ENCODE measurements at regions of chr2 and their contacts with region 1.

Region 1: GRCh38 chr2:151638191-151638933 is 95.9 kb downstream of the NEB start:
- DNase-seq: peak; percentile 62
- ATAC-seq: peak; percentile 15
- H3K4me3 ChIP-seq: no peak overlapping the region
- H3K4me3 Mint-ChIP-seq: peak overlapping the region; percentile 77
- H3K27ac ChIP-seq: peak overlapping the region; percentile 78 to 89
- H3K27ac Mint-ChIP-seq: peak overlapping the region; percentile 93
- H3K4me1 ChIP-seq: peaks cover 22 to 26% of the 10 kb centered on the region in 2 donors
- H3K4me1 Mint-ChIP-seq: peaks cover 28% of the 10 kb centered on the region
- H3K27me3 ChIP-seq: no peaks in the 10 kb centered on the region
- H3K27me3 Mint-ChIP-seq: no peaks in the 10 kb centered on the region
- CTCF ChIP-seq: no peak

Region 2: DNA sequence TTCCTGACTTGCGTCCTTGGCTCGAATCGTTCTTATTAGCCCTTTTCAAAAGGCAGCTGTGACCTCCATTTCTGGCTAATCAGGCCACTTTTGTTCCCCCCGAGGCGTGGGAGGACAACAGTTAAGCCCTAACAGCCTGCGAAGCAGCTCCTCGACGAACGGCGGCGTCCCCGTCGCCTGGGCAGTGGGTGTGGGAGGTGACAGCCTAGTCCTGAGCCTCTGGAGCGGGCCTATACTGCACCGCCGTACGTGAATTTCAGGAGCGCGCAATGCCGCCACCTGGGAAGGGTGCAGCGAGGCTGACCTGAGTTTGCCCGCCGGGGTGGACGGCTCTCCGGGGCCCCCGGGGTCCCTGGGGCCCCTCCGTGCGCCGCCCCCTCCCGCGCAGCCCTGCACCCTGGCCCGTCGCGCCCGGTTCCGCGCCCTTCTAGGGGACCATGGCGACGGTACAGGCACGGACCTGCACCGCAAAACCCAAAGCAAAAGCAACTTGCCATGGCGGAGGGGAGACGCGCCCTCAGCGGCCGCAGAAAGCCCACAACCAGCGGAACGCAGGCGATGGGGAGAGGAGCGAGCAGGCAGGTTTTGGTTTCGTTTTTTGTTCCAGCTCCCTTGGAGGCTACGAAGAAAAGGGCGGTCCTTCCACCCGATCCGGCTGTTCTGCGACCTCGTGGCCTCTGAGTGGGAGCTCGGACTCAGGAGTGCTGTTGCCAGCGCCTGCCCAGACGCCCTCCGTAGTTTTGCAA is 377.0 kb before region 1 on chr2 and contains the start of gene RBM43:
- CTCF ChIA-PET with region 1: no interaction called
- POLR2A ChIA-PET with region 1: no interaction called
- intact Hi-C with region 1: loop called (anchors 10 kb)
- DNase-seq: peak; percentile 86
- ATAC-seq: peak; percentile 84
- H3K4me3 ChIP-seq: peak within 1 kb of the TSS; percentile 78 to 96 (median 85)
- H3K4me3 Mint-ChIP-seq: peak within 1 kb of the TSS; percentile 94
- H3K27ac ChIP-seq: peak within 1 kb of the TSS; percentile 88 to 91
- H3K27ac Mint-ChIP-seq: peak within 1 kb of the TSS; percentile 87
- H3K4me1 ChIP-seq: peaks cover 11 to 12% of the 10 kb centered on the region in 2 donors
- H3K4me1 Mint-ChIP-seq: peaks cover 23% of the 10 kb centered on the region
- H3K27me3 ChIP-seq: no peaks in the 10 kb centered on the region
- H3K27me3 Mint-ChIP-seq: no peaks in the 10 kb centered on the region
- CTCF ChIP-seq: no peak
- total RNA-seq, gene RBM43: 8.4 and 9.0 TPM in 2 replicates

Region 3: DNA sequence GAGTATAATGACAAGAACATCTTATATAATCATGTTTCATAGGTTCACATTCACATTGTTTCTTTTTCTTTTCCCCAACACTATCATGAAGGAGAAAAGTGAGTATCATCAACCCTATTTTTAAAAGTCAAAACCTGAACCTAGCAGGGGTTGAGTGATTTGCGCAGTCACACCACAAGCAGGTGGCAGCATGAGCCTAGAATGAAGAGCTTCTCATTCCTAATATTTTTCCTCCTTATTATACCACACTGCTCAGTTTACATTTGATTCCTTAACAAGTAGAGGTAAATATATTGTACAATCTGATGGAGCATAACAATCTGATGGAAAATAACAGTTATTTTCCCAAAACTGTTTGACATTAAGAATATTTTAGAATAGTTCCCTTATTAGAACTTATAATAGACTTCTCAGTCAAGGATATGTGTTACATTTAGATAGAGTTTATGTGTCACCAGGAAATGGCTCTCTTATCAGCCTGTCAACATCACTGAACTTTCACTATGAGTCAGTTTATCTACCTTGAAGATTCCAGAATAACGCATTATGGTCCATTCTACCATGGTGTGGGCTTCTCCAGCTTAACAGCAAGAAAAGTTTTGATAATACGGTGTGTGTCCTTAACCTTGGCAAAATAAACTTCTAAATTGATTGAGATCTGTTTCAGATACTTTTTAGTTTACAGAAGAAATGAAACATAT is 23.6 kb before region 1 on chr2:
- CTCF ChIA-PET with region 1: interaction called, 10 read pairs
- POLR2A ChIA-PET with region 1: no interaction called
- intact Hi-C with region 1: no loop called
- DNase-seq: no peak
- ATAC-seq: no peak
- H3K4me3 ChIP-seq: no peak overlapping the region
- H3K4me3 Mint-ChIP-seq: no peak overlapping the region
- H3K27ac ChIP-seq: no peak overlapping the region
- H3K27ac Mint-ChIP-seq: no peak overlapping the region
- H3K4me1 ChIP-seq: no peaks in the 10 kb centered on the region
- H3K4me1 Mint-ChIP-seq: peaks cover 2% of the 10 kb centered on the region
- H3K27me3 ChIP-seq: no peaks in the 10 kb centered on the region
- H3K27me3 Mint-ChIP-seq: no peaks in the 10 kb centered on the region
- CTCF ChIP-seq: no peak

Region 4: GRCh38 chr2:151766437-151767153 is 128.2 kb after region 1 on chr2:
- CTCF ChIA-PET with region 1: interaction called, 17 read pairs
- POLR2A ChIA-PET with region 1: interaction called, 5 read pairs
- intact Hi-C with region 1: loop called (anchors 1 kb)
- DNase-seq: peak; percentile 66
- ATAC-seq: peak; percentile 62
- H3K4me3 ChIP-seq: peak overlapping the region in 2 of 5 experiments; percentile 8 to 40
- H3K4me3 Mint-ChIP-seq: peak overlapping the region; percentile 69
- H3K27ac ChIP-seq: peak overlapping the region; percentile 79 to 89
- H3K27ac Mint-ChIP-seq: peak overlapping the region; percentile 93
- H3K4me1 ChIP-seq: peaks cover 85 to 90% of the 10 kb centered on the region in 2 donors
- H3K4me1 Mint-ChIP-seq: peaks cover 87% of the 10 kb centered on the region
- H3K27me3 ChIP-seq: no peaks in the 10 kb centered on the region
- H3K27me3 Mint-ChIP-seq: no peaks in the 10 kb centered on the region
- CTCF ChIP-seq: no peak

Region 5: GRCh38 chr2:151771599-151772358 is 133.4 kb after region 1 on chr2:
- CTCF ChIA-PET with region 1: interaction called, 17 read pairs
- POLR2A ChIA-PET with region 1: interaction called, 5 read pairs
- intact Hi-C with region 1: loop called (anchors 1 kb)
- DNase-seq: peak; percentile 93
- ATAC-seq: peak; percentile 90
- H3K4me3 ChIP-seq: peak overlapping the region in 1 of 5 experiments; percentile 38
- H3K4me3 Mint-ChIP-seq: peak overlapping the region; percentile 76
- H3K27ac ChIP-seq: peak overlapping the region; percentile 95 to 96
- H3K27ac Mint-ChIP-seq: peak overlapping the region; percentile 93
- H3K4me1 ChIP-seq: peaks cover 78 to 80% of the 10 kb centered on the region in 2 donors
- H3K4me1 Mint-ChIP-seq: peaks cover 90% of the 10 kb centered on the region
- H3K27me3 ChIP-seq: no peaks in the 10 kb centered on the region
- H3K27me3 Mint-ChIP-seq: no peaks in the 10 kb centered on the region
- CTCF ChIP-seq: no peak

Region 6: GRCh38 chr2:151808258-151809072 is 170.1 kb after region 1 on chr2:
- CTCF ChIA-PET with region 1: interaction called, 5 read pairs
- POLR2A ChIA-PET with region 1: no interaction called
- intact Hi-C with region 1: loop called (anchors 5 kb)
- DNase-seq: peak; percentile 60
- ATAC-seq: peak; percentile 64
- H3K4me3 ChIP-seq: no peak overlapping the region
- H3K4me3 Mint-ChIP-seq: no peak overlapping the region
- H3K27ac ChIP-seq: peak overlapping the region in 1 of 2 donors; percentile 31
- H3K27ac Mint-ChIP-seq: no peak overlapping the region
- H3K4me1 ChIP-seq: peaks cover 4 to 11% of the 10 kb centered on the region in 2 donors
- H3K4me1 Mint-ChIP-seq: peaks cover 7% of the 10 kb centered on the region
- H3K27me3 ChIP-seq: no peaks in the 10 kb centered on the region
- H3K27me3 Mint-ChIP-seq: no peaks in the 10 kb centered on the region
- CTCF ChIP-seq: peak; percentile 94